ENCODE measurements at regions of chr3 and their contacts with region 1.

Region 1: DNA sequence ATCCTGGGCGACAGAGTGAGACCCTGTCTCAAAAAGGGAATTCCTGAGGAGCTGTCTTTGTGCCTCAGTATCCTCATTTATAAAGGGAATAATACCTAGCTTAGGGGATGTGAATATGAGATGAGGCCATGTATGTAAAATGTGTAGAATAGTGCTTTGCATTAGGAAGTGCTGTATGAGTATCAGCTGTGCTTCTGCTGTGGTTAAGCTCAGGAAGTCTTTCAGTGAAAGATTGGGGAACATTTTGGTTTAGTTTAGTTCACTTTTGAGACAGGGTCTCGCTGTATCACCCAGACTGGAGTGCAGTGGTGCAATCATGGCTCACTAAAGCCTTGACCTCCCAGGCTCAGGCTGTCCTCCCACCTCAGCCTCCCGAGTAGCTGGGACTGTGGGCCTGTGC is 10.6 kb downstream of the THUMPD3 start:
- DNase-seq: no peak
- CTCF ChIP-seq: no peak

Region 2: GRCh38 chr3:9404680-9405079 is 31.2 kb after region 1 on chr3:
- CTCF ChIA-PET with region 1: no interaction called
- POLR2A ChIA-PET with region 1: interaction called, 10 read pairs
- DNase-seq: peak; percentile 18
- CTCF ChIP-seq: no peak

Region 3: DNA sequence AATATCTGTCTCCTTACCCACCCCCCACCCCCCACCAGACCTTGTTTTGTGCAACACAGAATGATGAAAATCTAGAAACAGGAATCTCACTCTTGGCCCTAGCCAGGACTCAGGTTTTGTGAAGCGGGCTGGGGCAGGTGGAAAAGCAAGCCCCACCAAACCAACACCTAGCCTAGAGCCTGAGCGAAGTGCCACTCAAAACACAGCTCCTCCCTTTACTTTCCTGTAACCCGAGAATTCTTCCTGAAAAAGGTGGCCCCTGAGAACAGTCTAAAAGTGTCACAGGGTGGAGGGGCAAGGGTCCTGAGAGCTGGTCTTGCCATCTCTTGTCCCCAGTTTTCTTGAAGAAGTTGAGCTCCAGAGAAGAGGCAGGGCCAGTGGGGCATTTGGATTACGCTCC is 487.7 kb after region 1 on chr3:
- CTCF ChIA-PET with region 1: no interaction called
- POLR2A ChIA-PET with region 1: interaction called, 11 read pairs
- DNase-seq: no peak
- CTCF ChIP-seq: no peak

Measured in GM10248 (cell line).